ENCODE measurements at regions of chr1 and their contacts with region 1.

Region 1: GRCh38 chr1:109307274-109308021 is 637 bp upstream of the MYBPHL start:
- DNase-seq: peak; percentile 78 to 87 (median 80)
- ATAC-seq: peak; percentile 70
- H3K4me3 ChIP-seq: no peak overlapping the region
- H3K27ac ChIP-seq: peak overlapping the region; percentile 57
- H3K4me1 ChIP-seq: peaks cover 18 to 36% of the 10 kb centered on the region in 2 experiments
- H3K27me3 ChIP-seq: no peaks in the 10 kb centered on the region
- CTCF ChIP-seq: no peak
- EP300 ChIP-seq: peak; percentile 51; the same call in 1 of the 2 replicates
- POLR2A ChIP-seq: no peak
- RAD21 ChIP-seq: no peak; a peak in 1 of 4 replicates

Region 2: GRCh38 chr1:109295712-109296415 is 11.6 kb before region 1 on chr1:
- CTCF ChIA-PET with region 1: no interaction called
- POLR2A ChIA-PET with region 1: interaction called, 29 read pairs
- in situ Hi-C with region 1: no loop called
- intact Hi-C with region 1: no loop called
- DNase-seq: no peak
- ATAC-seq: 0 out of 3 replicates have a peak, but pooled peaks have one; percentile 4
- H3K4me3 ChIP-seq: no peak overlapping the region
- H3K27ac ChIP-seq: no peak overlapping the region
- H3K4me1 ChIP-seq: peaks cover 27 to 45% of the 10 kb centered on the region in 2 experiments
- H3K27me3 ChIP-seq: no peaks in the 10 kb centered on the region
- CTCF ChIP-seq: peak in 2 of 3 experiments; percentile 10 to 21; a peak in 1 of 6 replicates
- EP300 ChIP-seq: no peak
- POLR2A ChIP-seq: no peak
- RAD21 ChIP-seq: no peak